ENCODE measurements at regions of chr9 and their contacts with region 1.

Region 1: DNA sequence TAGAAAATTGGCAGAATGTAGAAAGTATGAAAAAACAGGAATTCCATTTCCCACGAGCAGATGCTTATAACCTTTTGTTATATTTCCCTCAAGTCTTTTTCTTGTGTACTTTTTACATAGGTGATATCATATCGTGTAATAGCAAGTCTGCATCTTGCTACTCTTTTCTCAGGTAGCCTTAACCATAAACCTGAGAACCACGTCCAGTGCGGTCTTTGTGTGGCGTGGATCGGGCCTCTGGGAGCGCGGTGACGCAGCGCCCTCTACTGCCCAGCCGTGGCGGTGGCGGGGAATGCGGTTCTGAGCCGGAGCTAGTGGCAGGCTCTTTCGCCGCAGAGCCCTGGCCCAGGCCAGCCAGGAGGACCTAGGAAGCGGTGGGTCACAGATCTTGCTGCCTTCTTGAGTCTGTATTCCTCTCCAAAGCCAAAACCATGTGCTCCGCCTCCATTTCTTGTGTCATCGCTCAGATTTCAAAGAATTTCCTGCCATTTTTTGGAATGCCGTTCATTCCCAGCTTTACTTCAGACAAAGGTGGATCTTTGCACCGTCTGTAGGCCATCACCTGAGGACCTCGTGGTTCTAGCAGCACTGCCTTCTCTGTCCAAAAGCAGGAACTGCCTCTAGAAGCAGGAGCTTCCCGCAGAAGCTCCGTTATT is 71.9 kb downstream of the MVB12B start:
- DNase-seq: peak; percentile 82
- H3K4me3 Mint-ChIP-seq: no peak overlapping the region
- H3K27ac Mint-ChIP-seq: no peak overlapping the region
- H3K4me1 Mint-ChIP-seq: peaks cover 42% of the 10 kb centered on the region
- H3K27me3 Mint-ChIP-seq: no peaks in the 10 kb centered on the region

Region 2: GRCh38 chr9:125558453-125559092 is 840.0 kb before region 1 on chr9:
- CTCF ChIA-PET with region 1: no interaction called
- intact Hi-C with region 1: loop called (anchors 2 kb)
- DNase-seq: peak; percentile 81
- H3K4me3 Mint-ChIP-seq: no peak overlapping the region
- H3K27ac Mint-ChIP-seq: no peak overlapping the region
- H3K4me1 Mint-ChIP-seq: peaks cover 11% of the 10 kb centered on the region
- H3K27me3 Mint-ChIP-seq: no peaks in the 10 kb centered on the region

Region 3: DNA sequence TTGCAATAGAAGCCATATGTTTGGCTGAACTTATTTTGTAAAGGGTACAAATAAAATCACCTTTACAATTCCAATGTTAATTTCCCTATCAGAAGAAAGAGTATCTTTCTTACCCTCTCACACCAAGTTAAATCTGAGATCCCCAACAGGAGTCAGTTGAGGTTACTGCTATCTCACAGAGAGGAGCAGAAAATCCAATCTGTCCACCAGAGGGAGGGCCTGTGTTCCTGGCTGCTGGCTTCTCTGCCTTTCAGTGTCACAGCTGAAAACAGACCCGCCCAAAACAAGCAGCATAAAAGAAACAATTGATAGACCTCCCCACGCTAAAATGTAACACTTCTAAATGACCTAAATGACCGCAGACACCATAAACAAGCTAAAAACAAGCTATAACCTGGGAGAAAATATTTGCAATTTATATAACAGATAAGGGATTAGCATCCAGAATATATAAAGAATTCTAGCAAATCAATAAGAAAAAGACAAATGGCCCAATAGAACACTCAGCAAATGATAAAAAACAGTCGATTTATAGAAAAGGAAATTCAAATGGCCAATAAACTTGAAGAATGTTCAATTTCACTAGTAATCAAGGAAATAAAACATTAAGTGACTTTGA is 96.4 kb before region 1 on chr9:
- CTCF ChIA-PET with region 1: interaction called, 19 read pairs
- intact Hi-C with region 1: loop called (anchors 1 kb)
- DNase-seq: peak; percentile 68
- H3K4me3 Mint-ChIP-seq: no peak overlapping the region
- H3K27ac Mint-ChIP-seq: no peak overlapping the region
- H3K4me1 Mint-ChIP-seq: no peaks in the 10 kb centered on the region
- H3K27me3 Mint-ChIP-seq: no peaks in the 10 kb centered on the region

Region 4: DNA sequence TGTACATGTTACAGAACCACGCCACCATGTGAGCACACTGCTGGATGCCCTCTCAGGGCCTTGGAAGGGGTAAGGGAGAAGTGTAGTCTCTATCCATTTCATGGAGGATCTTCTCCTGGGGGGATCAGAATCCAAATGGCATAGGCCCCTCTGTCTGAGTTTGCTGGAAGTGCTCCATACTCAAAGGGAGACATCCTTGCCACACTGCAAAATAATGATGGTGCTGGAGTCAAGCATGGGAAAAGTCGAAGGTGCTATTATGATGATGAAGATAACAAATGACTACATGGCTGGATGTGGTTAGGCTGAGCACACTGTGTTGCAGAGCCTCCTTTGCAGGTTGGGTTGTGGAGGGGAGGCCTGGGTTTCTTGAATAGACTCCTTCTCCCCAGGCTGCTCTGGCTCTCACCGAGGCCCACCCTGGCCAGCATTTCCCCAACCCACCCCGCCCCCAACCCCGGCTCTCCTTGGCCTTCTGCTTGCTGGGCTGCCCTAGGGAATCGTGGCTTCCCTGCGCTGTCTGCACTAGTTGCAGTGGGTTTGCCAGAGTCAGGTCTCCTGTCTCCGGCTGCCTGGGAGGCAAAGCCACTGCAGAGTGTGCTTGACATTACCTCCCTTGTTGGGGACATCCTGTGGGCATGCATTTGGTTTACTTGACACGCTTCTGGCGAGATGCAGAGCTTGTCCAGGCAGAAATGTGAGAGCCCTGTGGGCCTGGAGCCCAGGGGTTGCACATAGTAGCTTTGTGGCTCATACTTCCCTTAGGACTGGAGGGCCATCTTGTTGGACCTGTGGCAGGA is 68.9 kb before region 1 on chr9:
- CTCF ChIA-PET with region 1: interaction called, 9 read pairs
- intact Hi-C with region 1: loop called (anchors 2 kb)
- DNase-seq: no peak
- H3K4me3 Mint-ChIP-seq: no peak overlapping the region
- H3K27ac Mint-ChIP-seq: no peak overlapping the region
- H3K4me1 Mint-ChIP-seq: peaks cover 6% of the 10 kb centered on the region
- H3K27me3 Mint-ChIP-seq: peaks cover 3% of the 10 kb centered on the region

Region 5: GRCh38 chr9:126471084-126471624 is 72.6 kb after region 1 on chr9:
- CTCF ChIA-PET with region 1: interaction called, 9 read pairs
- intact Hi-C with region 1: loop called (anchors 1 kb)
- DNase-seq: peak; percentile 92
- H3K4me3 Mint-ChIP-seq: peak overlapping the region; percentile 33
- H3K27ac Mint-ChIP-seq: peak overlapping the region; percentile 20
- H3K4me1 Mint-ChIP-seq: peaks cover 46% of the 10 kb centered on the region
- H3K27me3 Mint-ChIP-seq: no peaks in the 10 kb centered on the region

Measured in activated naive CD4-positive, alpha-beta T cell treated with anti-CD3 and anti-CD28 coated beads for 36 hours (primary cell).